PC-9 (cell line): ENCODE measurements at regions of chr10 and their contacts with region 1.

Region 1: DNA sequence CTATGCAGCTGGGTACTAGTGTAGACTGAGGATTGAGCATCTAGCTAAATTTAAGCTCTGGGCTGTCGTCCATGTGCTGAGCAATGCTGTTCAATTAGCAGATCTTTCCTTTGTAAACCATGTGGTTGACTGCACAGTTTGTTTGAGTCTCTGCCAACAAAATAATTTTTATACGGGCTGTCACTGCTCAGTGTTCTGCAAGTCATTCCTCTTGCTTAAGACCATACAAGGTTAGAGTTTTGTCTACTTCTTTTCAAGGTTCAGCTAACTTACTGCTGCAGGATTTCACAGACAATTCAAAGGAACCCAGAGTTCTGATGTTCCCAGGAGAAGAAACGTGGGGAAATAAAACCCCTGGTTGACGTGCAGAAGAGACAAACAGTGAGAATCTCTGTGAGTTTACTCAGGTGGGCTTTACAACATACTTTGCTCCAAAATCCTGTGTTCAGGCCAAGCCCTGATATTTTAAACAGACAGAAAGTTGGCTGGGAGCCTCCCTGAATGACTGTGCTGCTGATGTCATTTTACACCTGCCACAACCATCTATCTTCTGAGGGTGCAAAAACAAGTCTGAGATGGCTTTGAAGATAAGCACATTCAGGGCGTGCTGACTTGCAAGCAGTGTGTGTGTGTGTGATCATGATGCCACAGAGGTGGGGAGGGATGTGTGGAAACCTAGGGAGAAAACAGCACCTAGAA is 177.1 kb upstream of the SVIL start:
- DNase-seq: peak; percentile 78 to 94
- H3K4me3 ChIP-seq: peak overlapping the region; percentile 33; the same call in 1 of the 2 replicates
- H3K27ac ChIP-seq: peak overlapping the region; percentile 99
- H3K4me1 ChIP-seq: peaks cover 58% of the 10 kb centered on the region
- H3K27me3 ChIP-seq: no peaks in the 10 kb centered on the region
- CTCF ChIP-seq: no peak

Region 2: GRCh38 chr10:29583645-29584044 is 228.3 kb before region 1 on chr10:
- CTCF ChIA-PET with region 1: no interaction called
- POLR2A ChIA-PET with region 1: no interaction called
- intact Hi-C with region 1: no loop called
- DNase-seq: peak in 1 of 2 experiments; percentile 52
- H3K4me3 ChIP-seq: no peak overlapping the region
- H3K27ac ChIP-seq: no peak overlapping the region
- H3K4me1 ChIP-seq: peaks cover 37% of the 10 kb centered on the region
- H3K27me3 ChIP-seq: no peaks in the 10 kb centered on the region
- CTCF ChIP-seq: no peak

Region 3: DNA sequence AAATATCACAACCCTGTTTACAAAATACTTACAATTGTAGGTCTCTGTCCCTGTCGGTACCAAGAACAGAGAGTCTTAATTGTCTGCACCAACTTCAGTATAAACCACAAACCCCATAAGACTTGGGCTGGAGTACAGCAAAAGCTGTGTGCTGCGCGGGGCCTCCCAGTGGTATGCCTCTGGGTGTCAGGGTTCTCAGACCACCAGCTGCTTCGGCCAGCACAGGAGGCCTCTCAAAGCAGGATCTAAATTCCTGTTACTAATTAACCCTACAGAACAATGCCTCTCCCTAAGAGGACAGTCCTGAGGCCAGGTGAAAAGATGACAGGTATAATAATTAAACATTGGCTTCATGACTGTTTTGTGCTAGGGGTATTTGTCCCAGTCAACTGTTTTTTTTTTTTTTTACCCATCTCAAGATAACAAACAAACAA is 176.2 kb before region 1 on chr10:
- CTCF ChIA-PET with region 1: no interaction called
- POLR2A ChIA-PET with region 1: no interaction called
- intact Hi-C with region 1: loop called (anchors 5 kb)
- DNase-seq: no peak
- H3K4me3 ChIP-seq: no peak overlapping the region
- H3K27ac ChIP-seq: peak overlapping the region; percentile 35; the same call in 1 of the 2 replicates
- H3K4me1 ChIP-seq: peaks cover 62% of the 10 kb centered on the region
- H3K27me3 ChIP-seq: no peaks in the 10 kb centered on the region
- CTCF ChIP-seq: no peak

Region 4: GRCh38 chr10:29658984-29659965 is 152.6 kb before region 1 on chr10:
- CTCF ChIA-PET with region 1: no interaction called
- POLR2A ChIA-PET with region 1: no interaction called
- intact Hi-C with region 1: loop called (anchors 2 kb)
- DNase-seq: peak; percentile 87 to 97
- H3K4me3 ChIP-seq: no peak overlapping the region
- H3K27ac ChIP-seq: peak overlapping the region; percentile 76
- H3K4me1 ChIP-seq: peaks cover 51% of the 10 kb centered on the region
- H3K27me3 ChIP-seq: no peaks in the 10 kb centered on the region
- CTCF ChIP-seq: peak; percentile 45; the same call in 1 of the 2 replicates

Region 5: DNA sequence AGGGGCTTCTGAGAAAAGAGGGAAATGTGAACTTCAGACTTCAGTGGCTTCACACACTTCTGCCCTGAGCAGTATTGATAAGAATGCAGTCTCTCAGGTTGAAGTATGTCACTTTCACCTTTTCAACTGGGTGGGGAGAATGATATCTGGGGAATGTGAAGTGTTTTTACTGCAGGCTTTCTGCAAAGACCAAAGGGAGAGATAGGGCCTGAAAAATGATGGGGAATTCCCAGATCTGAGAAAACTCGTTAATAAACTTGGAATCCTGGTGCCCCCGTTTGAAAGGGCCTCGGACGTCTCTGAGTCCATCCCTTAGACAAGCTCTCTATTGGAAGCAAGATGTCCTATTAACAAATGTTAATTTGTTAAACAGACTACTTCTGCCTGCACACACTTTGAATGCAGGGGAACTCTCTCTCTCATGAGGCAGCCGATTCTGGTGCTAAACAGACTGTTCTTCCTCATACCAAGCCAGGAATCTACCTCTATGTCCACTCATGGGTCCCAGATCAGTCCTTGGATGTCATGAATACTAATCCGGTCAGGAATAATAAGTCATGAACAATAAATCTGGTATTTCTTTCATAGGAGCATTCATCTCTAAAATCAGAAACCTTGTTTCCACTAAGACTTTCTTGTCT is 53.9 kb after region 1 on chr10:
- CTCF ChIA-PET with region 1: no interaction called
- POLR2A ChIA-PET with region 1: interaction called, 7 read pairs
- intact Hi-C with region 1: loop called (anchors 1 kb)
- DNase-seq: peak; percentile 56 to 94
- H3K4me3 ChIP-seq: no peak overlapping the region
- H3K27ac ChIP-seq: peak overlapping the region; percentile 98
- H3K4me1 ChIP-seq: peaks cover 62% of the 10 kb centered on the region
- H3K27me3 ChIP-seq: no peaks in the 10 kb centered on the region
- CTCF ChIP-seq: no peak

Region 6: GRCh38 chr10:29949411-29950011 is 137.6 kb after region 1 on chr10:
- CTCF ChIA-PET with region 1: no interaction called
- POLR2A ChIA-PET with region 1: interaction called, 7 read pairs
- intact Hi-C with region 1: loop called (anchors 1 kb)
- DNase-seq: peak; percentile 44 to 96
- H3K4me3 ChIP-seq: no peak overlapping the region
- H3K27ac ChIP-seq: peak overlapping the region; percentile 91
- H3K4me1 ChIP-seq: peaks cover 51% of the 10 kb centered on the region
- H3K27me3 ChIP-seq: no peaks in the 10 kb centered on the region
- CTCF ChIP-seq: no peak

Region 7: DNA sequence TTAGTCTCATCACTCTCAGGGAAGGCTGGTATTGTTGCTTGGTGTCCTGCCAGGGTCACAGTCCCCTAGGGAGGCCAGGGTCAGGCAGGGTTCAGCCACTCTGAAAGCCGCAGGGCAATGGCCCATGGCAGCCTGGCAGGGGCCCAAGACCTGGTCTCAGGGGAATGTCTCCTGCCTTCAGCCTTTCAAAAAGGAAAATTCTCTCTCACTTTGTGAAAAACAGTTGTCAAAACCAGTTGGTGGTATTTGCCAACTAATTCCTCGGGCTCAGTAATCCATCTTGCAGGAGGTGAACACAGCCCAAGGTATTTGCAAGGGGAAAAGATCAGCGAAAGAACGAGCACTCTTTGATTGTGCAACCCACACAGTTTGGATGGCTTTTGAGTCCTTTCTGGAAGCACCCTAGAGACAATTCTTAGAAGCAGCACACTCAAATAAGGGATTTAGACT is 146.0 kb after region 1 on chr10:
- CTCF ChIA-PET with region 1: no interaction called
- POLR2A ChIA-PET with region 1: no interaction called
- intact Hi-C with region 1: loop called (anchors 1 kb)
- DNase-seq: peak; percentile 94 to 97
- H3K4me3 ChIP-seq: no peak overlapping the region
- H3K27ac ChIP-seq: peak overlapping the region; percentile 88
- H3K4me1 ChIP-seq: peaks cover 44% of the 10 kb centered on the region
- H3K27me3 ChIP-seq: no peaks in the 10 kb centered on the region
- CTCF ChIP-seq: no peak